A673 (cell line): ENCODE measurements at regions of chr4 and their contacts with region 1.

Region 1: GRCh38 chr4:159455675-159456237 is 352.9 kb downstream of the RAPGEF2 start:
- DNase-seq: peak; percentile 79
- H3K4me3 ChIP-seq: no peak overlapping the region
- H3K27ac ChIP-seq: no peak overlapping the region
- H3K4me1 ChIP-seq: peaks cover 3% of the 10 kb centered on the region
- H3K27me3 ChIP-seq: no peaks in the 10 kb centered on the region
- CTCF ChIP-seq: peak; percentile 99

Region 2: GRCh38 chr4:158768555-158769174 is 687.1 kb before region 1 on chr4 and contains the start of gene FNIP2:
- CTCF ChIA-PET with region 1: no interaction called
- POLR2A ChIA-PET with region 1: interaction called, 15 read pairs
- intact Hi-C with region 1: no loop called
- DNase-seq: peak; percentile 82
- H3K4me3 ChIP-seq: peak within 1 kb of the TSS; percentile 57
- H3K27ac ChIP-seq: peak within 1 kb of the TSS; percentile 57
- H3K4me1 ChIP-seq: peaks cover 9% of the 10 kb centered on the region
- H3K27me3 ChIP-seq: peaks cover 7% of the 10 kb centered on the region
- CTCF ChIP-seq: no peak
- total RNA-seq, gene FNIP2: 16.1 and 17.6 TPM in 2 replicates

Region 3: DNA sequence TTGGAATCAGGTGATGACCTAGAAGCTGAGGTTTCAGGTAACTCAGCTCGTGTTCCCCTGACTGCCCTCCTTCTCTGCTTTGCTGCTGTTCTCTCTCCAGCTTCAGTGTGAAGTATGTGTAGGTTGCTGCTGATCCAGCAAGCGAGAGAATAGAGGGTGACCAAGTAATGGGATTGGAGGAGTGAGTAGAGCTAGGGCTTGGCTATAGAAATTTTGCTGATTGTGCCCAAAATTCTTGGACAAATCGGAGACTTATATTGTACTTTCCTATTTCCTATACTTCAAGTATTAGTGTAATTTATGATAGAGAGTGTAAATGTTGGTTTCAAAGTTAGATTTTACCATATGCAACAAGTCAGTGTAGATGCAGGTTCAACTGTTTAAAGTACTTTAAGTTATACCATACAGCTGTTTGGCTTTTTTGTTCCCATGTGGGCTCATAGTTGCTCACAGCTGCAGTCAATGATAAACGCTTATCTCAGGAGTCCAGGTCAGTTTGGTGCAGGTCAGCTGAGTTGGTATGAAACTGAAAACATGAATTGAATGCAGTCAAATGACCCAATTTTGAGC is 304.9 kb before region 1 on chr4:
- CTCF ChIA-PET with region 1: no interaction called
- POLR2A ChIA-PET with region 1: no interaction called
- intact Hi-C with region 1: no loop called
- DNase-seq: no peak
- H3K4me3 ChIP-seq: no peak overlapping the region
- H3K27ac ChIP-seq: no peak overlapping the region
- H3K4me1 ChIP-seq: no peaks in the 10 kb centered on the region
- H3K27me3 ChIP-seq: no peaks in the 10 kb centered on the region
- CTCF ChIP-seq: no peak

Region 4: GRCh38 chr4:159376289-159376688 is 79.5 kb before region 1 on chr4:
- CTCF ChIA-PET with region 1: interaction called, 10 read pairs
- POLR2A ChIA-PET with region 1: no interaction called
- intact Hi-C with region 1: no loop called
- DNase-seq: no peak
- H3K4me3 ChIP-seq: no peak overlapping the region
- H3K27ac ChIP-seq: no peak overlapping the region
- H3K4me1 ChIP-seq: no peaks in the 10 kb centered on the region
- H3K27me3 ChIP-seq: no peaks in the 10 kb centered on the region
- CTCF ChIP-seq: no peak

Region 5: GRCh38 chr4:159401791-159402380 is 53.9 kb before region 1 on chr4:
- CTCF ChIA-PET with region 1: no interaction called
- POLR2A ChIA-PET with region 1: no interaction called
- intact Hi-C with region 1: no loop called
- DNase-seq: no peak
- H3K4me3 ChIP-seq: no peak overlapping the region
- H3K27ac ChIP-seq: no peak overlapping the region
- H3K4me1 ChIP-seq: no peaks in the 10 kb centered on the region
- H3K27me3 ChIP-seq: no peaks in the 10 kb centered on the region
- CTCF ChIP-seq: no peak

Region 6: DNA sequence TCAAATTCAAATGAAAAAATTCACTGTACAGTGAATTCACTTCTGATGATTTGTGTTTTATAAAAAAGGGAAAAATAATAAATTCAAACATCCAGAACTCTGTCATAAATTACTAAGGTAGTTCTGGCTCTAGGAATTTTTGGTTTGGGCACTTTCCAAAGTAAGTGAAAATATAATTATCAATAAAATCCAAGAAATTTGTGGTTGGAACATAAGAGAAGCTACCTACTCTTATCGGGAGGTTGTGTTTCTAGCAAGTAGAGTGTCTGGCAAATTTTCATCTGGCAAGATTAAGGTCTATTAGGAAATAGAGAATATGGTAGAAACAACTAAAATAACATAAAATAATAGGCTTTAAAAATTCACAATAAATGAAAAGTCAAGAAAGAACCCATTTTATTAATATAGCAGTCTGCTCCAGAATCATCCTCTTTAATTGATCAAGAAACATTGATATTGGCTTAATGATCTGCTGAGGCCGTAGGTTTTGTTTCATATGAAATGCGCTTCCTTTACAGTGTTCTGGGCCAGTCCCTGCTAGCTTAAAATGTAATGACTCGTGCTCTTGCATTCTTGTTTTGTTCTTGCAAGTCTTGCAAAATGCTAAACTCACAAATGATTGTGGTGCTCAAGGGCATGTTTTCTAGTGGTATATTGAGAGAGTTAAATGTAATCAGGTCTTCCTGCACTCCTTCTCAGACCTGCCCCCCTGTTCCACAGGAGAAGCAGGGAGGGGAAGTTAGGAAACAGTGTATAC is 21.5 kb before region 1 on chr4:
- CTCF ChIA-PET with region 1: interaction called, 11 read pairs
- POLR2A ChIA-PET with region 1: no interaction called
- intact Hi-C with region 1: no loop called
- DNase-seq: peak; percentile 30
- H3K4me3 ChIP-seq: no peak overlapping the region
- H3K27ac ChIP-seq: no peak overlapping the region
- H3K4me1 ChIP-seq: peaks cover 12% of the 10 kb centered on the region
- H3K27me3 ChIP-seq: no peaks in the 10 kb centered on the region
- CTCF ChIP-seq: no peak